Heart left ventricle (tissue), 16 donors: ENCODE measurements at regions of chr11 and their contacts with region 1.

Region 1: GRCh38 chr11:2885676-2886081 is at the start of gene CDKN1C:
- DNase-seq: peak; percentile 83 to 94 (median 91)
- ATAC-seq: peak; percentile 59 to 82 (median 76)
- H3K4me3 ChIP-seq: peak within 1 kb of the TSS; percentile 67 to 90 (median 85)
- H3K27ac ChIP-seq: peak within 1 kb of the TSS; percentile 71 to 94 (median 88)
- H3K4me1 ChIP-seq: peaks cover 0 to 43% (median 25%) of the 10 kb centered on the region in 12 donors
- H3K27me3 ChIP-seq: peaks cover 0 to 14% (median 0%) of the 10 kb centered on the region in 9 donors
- CTCF ChIP-seq: no peak
- POLR2A ChIP-seq: peak in 1 of 2 donors; percentile 95
- total RNA-seq, gene CDKN1C: 18.8 to 39.1 (median 33.4) TPM

Region 2: GRCh38 chr11:2428322-2428795 is 457.3 kb before region 1 on chr11:
- intact Hi-C with region 1: loop called in 8 of 10 experiments (anchors 1 to 5 kb)
- DNase-seq: peak; percentile 67 to 89 (median 78)
- ATAC-seq: peak; percentile 73 to 91 (median 78)
- H3K4me3 ChIP-seq: no peak overlapping the region
- H3K27ac ChIP-seq: no peak overlapping the region
- H3K4me1 ChIP-seq: no peaks in the 10 kb centered on the region
- H3K27me3 ChIP-seq: no peaks in the 10 kb centered on the region
- CTCF ChIP-seq: peak; percentile 71 to 87 (median 84)
- POLR2A ChIP-seq: no peak

Region 3: GRCh38 chr11:2532704-2533586 is 352.7 kb before region 1 on chr11:
- intact Hi-C with region 1: loop called (anchors 1 kb)
- DNase-seq: peak; percentile 89 to 95 (median 91)
- ATAC-seq: peak; percentile 77 to 90 (median 82)
- H3K4me3 ChIP-seq: peak overlapping the region in 11 of 12 donors; percentile 6 to 58 (median 32)
- H3K27ac ChIP-seq: peak overlapping the region in 10 of 12 donors; percentile 5 to 70 (median 52)
- H3K4me1 ChIP-seq: peaks cover 0 to 24% (median 17%) of the 10 kb centered on the region in 12 donors
- H3K27me3 ChIP-seq: no peaks in the 10 kb centered on the region
- CTCF ChIP-seq: peak; percentile 98 to 100 (median 99)
- POLR2A ChIP-seq: no peak

Region 4: DNA sequence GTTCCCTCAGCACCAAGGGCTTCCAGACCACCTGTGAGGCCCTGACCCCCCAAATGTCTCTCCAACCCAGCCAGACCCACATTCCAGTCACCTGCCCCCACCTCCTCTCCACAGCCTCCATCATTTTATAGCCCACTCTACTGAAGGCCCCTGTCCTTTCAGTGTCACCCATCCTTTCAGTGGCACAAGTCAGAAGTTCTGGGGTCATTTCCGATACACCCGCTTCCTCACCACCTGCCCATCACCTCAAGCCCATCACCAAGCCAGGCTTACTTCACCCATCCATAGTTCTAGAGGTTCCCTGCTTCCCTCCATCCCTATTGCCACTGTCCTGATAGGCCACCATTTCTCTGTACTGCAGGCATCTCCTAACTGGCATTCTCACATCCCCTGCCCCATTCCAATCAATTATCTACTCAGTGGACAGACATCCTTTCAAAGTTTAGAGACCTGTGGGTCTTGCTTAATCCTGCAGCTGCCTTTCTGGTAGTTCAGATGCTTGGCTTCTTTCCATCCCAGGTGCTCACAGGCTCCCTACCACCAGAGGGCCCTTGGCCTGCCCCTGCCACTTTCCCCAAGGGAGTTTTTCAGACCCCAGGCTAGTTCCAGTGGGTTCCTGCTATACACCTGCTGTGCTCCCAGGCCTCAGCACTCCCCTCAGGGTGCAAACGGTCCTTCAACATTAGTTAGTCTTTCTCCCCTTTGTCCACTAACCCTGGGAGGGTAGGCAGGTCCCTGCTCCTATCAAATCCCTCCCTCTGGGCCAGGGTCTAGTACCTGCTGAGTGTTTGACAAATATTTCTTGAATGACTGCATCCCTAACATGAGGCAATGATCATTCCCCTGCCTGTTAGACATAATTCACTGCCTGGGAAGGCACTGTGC is 193.4 kb before region 1 on chr11:
- intact Hi-C with region 1: loop called in 8 of 10 experiments (anchors 5 to 10 kb)
- DNase-seq: no peak
- ATAC-seq: no peak
- H3K4me3 ChIP-seq: no peak overlapping the region
- H3K27ac ChIP-seq: no peak overlapping the region
- H3K4me1 ChIP-seq: peaks cover 0 to 86% (median 43%) of the 10 kb centered on the region in 12 donors
- H3K27me3 ChIP-seq: no peaks in the 10 kb centered on the region
- CTCF ChIP-seq: peak in 2 of 12 donors; percentile 7 to 15
- POLR2A ChIP-seq: no peak

Region 5: DNA sequence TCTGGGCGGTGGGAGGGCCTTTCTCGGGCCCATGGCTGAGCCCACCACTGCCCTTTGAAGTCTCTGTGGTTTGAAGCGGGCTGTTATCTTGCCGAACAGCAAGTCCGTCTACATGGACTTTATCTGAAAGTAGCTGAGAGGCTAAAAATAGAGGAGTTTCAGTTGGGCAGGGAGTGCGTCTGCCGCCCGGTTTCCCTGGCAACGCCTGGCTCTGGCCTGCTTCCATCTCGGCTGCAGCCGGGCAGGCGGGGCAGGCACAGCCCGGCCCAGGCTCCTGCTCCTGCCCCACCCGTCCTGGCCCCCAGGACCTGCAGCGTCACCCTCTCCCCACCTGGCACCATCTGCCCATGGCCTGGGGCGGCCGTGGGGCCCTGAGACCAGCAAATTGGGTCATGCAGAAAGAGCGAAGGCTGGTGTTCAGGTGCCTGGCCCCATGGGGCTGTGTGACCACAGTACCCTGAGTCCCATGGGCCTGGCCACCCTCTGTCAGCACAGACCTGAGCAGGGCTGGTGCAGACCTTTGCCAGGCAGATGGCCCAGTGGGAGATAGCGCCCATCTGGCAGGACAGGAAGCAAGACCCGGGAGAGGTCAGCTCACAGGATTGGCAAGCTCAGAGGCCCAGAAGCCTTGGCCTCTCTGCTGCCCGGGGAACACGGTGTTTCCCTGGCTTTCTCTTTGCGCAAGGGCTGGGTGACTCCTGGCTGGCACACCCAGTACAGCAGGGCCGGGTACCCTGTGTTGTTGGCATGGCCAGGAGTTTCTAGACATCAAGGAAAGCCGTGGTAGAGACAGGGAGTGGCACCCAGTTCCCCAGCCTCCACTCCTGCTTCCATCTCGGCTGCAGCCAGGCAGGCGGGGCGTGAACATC is 106.8 kb before region 1 on chr11:
- intact Hi-C with region 1: loop called in 3 of 10 experiments (anchors 2 to 10 kb)
- DNase-seq: peak; percentile 80 to 94 (median 83)
- ATAC-seq: peak; percentile 86 to 91 (median 88)
- H3K4me3 ChIP-seq: peak overlapping the region in 5 of 12 donors; percentile 20 to 37 (median 32)
- H3K27ac ChIP-seq: peak overlapping the region; percentile 63 to 99 (median 90)
- H3K4me1 ChIP-seq: peaks cover 20 to 49% (median 41%) of the 10 kb centered on the region in 12 donors
- H3K27me3 ChIP-seq: no peaks in the 10 kb centered on the region
- CTCF ChIP-seq: peak in 9 of 12 donors; percentile 16 to 46 (median 35)
- POLR2A ChIP-seq: no peak

Region 6: GRCh38 chr11:2837096-2837601 is 48.5 kb before region 1 on chr11:
- intact Hi-C with region 1: loop called in 3 of 10 experiments (anchors 5 kb)
- DNase-seq: peak; percentile 80 to 88 (median 85)
- ATAC-seq: peak; percentile 86 to 91 (median 88)
- H3K4me3 ChIP-seq: peak overlapping the region in 1 of 12 donors; percentile 23
- H3K27ac ChIP-seq: peak overlapping the region in 11 of 12 donors; percentile 57 to 78 (median 66)
- H3K4me1 ChIP-seq: peaks cover 6 to 50% (median 25%) of the 10 kb centered on the region in 12 donors
- H3K27me3 ChIP-seq: no peaks in the 10 kb centered on the region
- CTCF ChIP-seq: peak in 10 of 12 donors; percentile 12 to 64 (median 44)
- POLR2A ChIP-seq: peak in 1 of 2 donors; percentile 31

Region 7: GRCh38 chr11:2929756-2930703 is 44.4 kb after region 1 on chr11:
- intact Hi-C with region 1: no loop called
- DNase-seq: peak in 3 of 5 donors; percentile 36 to 61 (median 38)
- ATAC-seq: peak in 3 of 4 donors; percentile 1 to 18 (median 15)
- H3K4me3 ChIP-seq: peak overlapping the region; percentile 22 to 65 (median 50)
- H3K27ac ChIP-seq: peak overlapping the region in 1 of 12 donors; percentile 73
- H3K4me1 ChIP-seq: peaks cover 4 to 44% (median 17%) of the 10 kb centered on the region in 12 donors
- H3K27me3 ChIP-seq: peaks cover 7 to 43% (median 25%) of the 10 kb centered on the region in 9 donors
- CTCF ChIP-seq: peak in 3 of 12 donors; percentile 40 to 48 (median 47)
- POLR2A ChIP-seq: no peak

Region 8: GRCh38 chr11:3049430-3050243 is 164.0 kb after region 1 on chr11:
- intact Hi-C with region 1: no loop called
- DNase-seq: peak; percentile 53 to 80 (median 69)
- ATAC-seq: peak; percentile 59 to 87 (median 86)
- H3K4me3 ChIP-seq: no peak overlapping the region
- H3K27ac ChIP-seq: peak overlapping the region in 5 of 12 donors; percentile 25 to 67 (median 49)
- H3K4me1 ChIP-seq: peaks cover 4 to 48% (median 31%) of the 10 kb centered on the region in 12 donors
- H3K27me3 ChIP-seq: no peaks in the 10 kb centered on the region
- CTCF ChIP-seq: peak in 3 of 12 donors; percentile 17 to 42 (median 41)
- POLR2A ChIP-seq: no peak